ENCODE measurements at regions of chr2 and their contacts with region 1.

Region 1: GRCh38 chr2:159516241-159516766 is 100.0 kb downstream of the BAZ2B start:
- DNase-seq: peak; percentile 9 to 79
- H3K4me3 ChIP-seq: peak overlapping the region; percentile 92
- H3K27ac ChIP-seq: peak overlapping the region; percentile 74
- H3K4me1 ChIP-seq: peaks cover 15% of the 10 kb centered on the region; the same call in 1 of the 2 replicates
- H3K27me3 ChIP-seq: no peaks in the 10 kb centered on the region
- CTCF ChIP-seq: no peak

Region 2: DNA sequence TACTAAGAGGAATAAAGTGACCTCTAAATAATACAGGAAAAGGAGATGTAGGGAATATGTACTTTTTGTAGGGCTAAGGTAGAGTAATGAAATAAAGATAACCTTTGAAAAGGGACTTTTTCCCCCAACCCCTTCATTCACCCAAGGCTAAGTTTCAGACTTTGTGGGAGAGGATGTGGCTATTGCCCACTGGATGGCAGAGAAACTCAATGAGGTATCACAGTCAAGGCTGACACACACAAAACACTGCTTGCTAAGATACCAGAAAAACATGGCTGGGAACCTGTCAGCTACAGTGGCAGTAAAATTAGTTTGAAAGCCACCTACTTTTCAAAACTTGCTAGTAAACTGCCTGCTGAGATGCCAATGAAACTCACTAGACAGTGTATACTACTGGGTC is 71.0 kb before region 1 on chr2:
- CTCF ChIA-PET with region 1: no interaction called
- POLR2A ChIA-PET with region 1: no interaction called
- intact Hi-C with region 1: no loop called
- DNase-seq: no peak
- H3K4me3 ChIP-seq: no peak overlapping the region
- H3K27ac ChIP-seq: no peak overlapping the region
- H3K4me1 ChIP-seq: no peaks in the 10 kb centered on the region
- H3K27me3 ChIP-seq: no peaks in the 10 kb centered on the region
- CTCF ChIP-seq: no peak

Region 3: DNA sequence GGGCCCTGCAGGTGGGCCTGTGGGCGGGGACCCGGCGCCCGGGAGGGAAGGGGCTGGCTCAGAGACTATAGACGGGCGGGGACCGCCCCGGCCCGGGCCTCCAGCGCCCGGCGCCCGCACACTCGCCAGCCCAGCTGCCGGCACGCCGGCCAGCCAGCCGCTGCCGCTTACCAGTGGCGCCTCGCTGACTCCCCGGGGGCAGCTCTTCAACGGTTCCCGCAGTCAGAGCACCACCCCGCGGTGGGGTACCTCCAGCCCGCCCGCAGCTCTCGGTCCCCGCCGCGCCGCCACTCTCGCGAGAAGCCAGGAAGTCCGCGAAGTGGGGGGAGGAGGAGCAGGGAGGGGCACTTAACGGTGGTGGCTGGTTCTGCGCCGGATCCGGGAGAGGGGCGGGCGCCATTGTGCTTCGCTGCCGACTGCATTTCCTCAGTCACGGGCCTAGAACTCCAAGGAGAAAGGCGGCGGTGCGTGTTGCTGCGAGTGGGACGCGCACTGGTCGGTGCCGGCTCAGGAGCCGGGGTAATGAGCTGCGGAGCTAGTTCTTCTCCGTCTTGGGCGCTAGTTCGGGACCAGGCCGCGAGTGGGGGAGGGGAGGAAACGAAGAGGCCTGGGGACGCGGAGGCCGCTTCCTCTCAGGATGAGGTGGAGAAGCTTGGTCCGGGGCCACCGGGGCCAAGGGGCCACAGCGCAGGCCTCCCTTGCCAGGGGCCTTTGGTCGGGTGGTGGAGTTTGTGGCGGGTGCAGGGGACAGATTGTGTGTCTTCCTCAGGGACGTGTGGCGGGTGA is 196.0 kb after region 1 on chr2 and contains the start of gene MARCHF7:
- CTCF ChIA-PET with region 1: no interaction called
- POLR2A ChIA-PET with region 1: interaction called, 3 read pairs
- intact Hi-C with region 1: loop called (anchors 1 kb)
- DNase-seq: peak; percentile 79 to 94
- H3K4me3 ChIP-seq: peak within 1 kb of the TSS; percentile 97
- H3K27ac ChIP-seq: peak within 1 kb of the TSS; percentile 78
- H3K4me1 ChIP-seq: peaks cover 37% of the 10 kb centered on the region
- H3K27me3 ChIP-seq: no peaks in the 10 kb centered on the region
- CTCF ChIP-seq: peak; percentile 32; the same call in 1 of the 2 replicates
- total RNA-seq, gene MARCHF7: 33.2 and 38.3 TPM in 2 replicates